Left ventricle myocardium superior (tissue), 1 donor: ENCODE measurements at regions of chr2 and their contacts with region 1.

Region 1: DNA sequence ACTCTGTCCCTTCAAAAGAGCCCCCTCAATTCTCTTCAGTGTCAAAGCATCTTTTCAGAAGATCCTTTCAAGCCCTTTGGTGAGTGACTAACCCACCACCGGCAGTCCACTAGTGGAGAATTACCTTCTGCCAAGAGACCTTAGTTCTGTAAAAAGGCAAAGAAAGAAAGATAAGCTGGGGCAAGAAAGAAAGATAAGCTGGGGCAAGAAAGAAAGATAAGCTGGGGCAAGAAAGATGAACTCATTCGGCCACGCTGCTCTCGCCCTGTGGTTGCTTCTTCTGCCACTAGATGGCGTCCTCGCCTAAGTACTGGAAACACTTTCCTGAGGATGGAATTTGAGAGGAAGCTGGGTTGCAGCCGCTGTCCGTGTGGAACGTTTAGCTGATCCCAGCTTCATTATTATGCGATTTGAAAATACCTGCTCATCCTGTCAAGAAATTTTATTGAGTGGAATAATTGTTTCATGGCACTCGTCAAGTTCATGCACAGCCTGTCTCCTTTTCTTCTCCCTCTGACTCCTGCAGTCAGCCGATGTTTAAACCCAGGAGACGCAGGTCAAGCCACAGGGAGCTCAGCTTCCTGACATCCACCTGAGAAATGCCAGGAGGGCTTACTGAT is 17.3 kb upstream of the ANXA4 start:
- DNase-seq: peak; percentile 88
- ATAC-seq: peak; percentile 89

Region 2: DNA sequence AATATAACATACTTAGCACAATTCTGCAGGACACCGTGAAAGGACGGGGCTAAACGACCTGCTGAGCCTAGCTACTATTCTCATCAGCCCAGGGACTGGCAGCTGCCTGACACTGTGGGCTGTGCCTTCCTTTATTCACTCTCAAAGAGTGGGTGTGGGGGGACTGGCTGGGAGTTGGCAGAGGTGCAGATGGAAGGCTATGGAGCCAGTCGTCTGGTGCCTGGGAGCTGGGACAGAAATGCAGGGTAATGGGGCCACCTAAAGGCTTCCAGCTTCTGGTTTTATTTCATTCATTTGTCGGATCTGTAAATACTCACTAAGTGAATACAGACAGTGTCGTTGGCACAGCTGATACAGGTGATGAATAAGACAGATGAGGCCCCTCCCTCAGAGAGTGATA is 231.4 kb before region 1 on chr2:
- intact Hi-C with region 1: no loop called
- DNase-seq: peak; percentile 45
- ATAC-seq: peak; percentile 83

Region 3: GRCh38 chr2:69652221-69652651 is 72.4 kb before region 1 on chr2:
- intact Hi-C with region 1: no loop called
- DNase-seq: no peak
- ATAC-seq: no peak

Region 4: GRCh38 chr2:69694894-69695849 is 29.5 kb before region 1 on chr2:
- intact Hi-C with region 1: no loop called
- DNase-seq: no peak
- ATAC-seq: no peak

Region 5: GRCh38 chr2:69816923-69817542 is 92.4 kb after region 1 on chr2:
- intact Hi-C with region 1: loop called (anchors 2 kb)
- DNase-seq: no peak
- ATAC-seq: peak; percentile 72